ENCODE measurements at regions of chr20 and their contacts with region 1.

Region 1: DNA sequence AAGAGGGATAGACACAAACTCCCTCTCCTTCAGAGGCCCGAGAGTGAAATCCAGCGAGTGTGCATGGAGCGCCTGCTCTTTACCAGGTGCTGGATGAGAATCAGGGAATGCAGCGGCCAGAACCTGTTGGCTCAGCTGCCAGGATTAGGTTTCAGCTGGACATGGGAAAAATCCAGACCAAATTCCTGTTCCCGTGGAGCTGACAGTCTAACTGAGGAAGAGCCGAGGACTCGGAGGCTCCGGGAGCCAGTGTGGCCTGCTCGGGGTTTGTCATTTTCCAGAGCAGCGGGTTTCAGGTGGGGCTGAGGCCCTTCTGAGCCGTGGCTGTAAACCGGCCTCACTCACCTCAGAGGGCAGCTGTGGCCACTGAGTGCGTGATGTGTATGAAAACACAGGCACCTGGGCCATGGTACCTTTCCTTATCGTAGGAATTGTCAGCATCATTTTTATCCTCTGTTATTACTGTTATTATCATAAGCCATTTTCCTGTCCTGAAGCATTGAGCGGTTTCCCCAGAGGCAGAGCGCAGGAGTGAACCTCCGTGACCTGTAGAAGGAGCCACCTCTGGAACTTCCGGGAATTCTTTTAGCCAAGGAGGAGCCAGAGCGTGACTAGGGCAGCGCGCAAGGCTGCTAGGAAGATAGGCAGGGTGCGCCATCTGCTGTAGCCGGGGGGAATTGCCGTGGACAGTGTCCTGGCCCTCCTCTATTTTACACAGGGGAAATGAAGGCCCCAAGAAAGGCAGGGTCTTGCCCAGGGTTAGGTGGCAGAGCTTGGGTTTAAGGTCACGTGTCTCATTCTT is 27.3 kb downstream of the PKIG start:
- DNase-seq: peak; percentile 82
- CTCF ChIP-seq: peak; percentile 91

Region 2: GRCh38 chr20:44210422-44211176 is 399.1 kb before region 1 on chr20 and contains the start of gene OSER1:
- in situ Hi-C with region 1: loop called (anchors 10 kb)
- DNase-seq: peak; percentile 99
- CTCF ChIP-seq: no peak

Region 3: GRCh38 chr20:44398303-44398702 is 211.4 kb before region 1 on chr20:
- in situ Hi-C with region 1: loop called (anchors 10 kb)
- DNase-seq: no peak
- CTCF ChIP-seq: no peak

Region 4: GRCh38 chr20:44566013-44566412 is 43.7 kb before region 1 on chr20:
- in situ Hi-C with region 1: no loop called
- DNase-seq: no peak
- CTCF ChIP-seq: no peak

Measured in GM13976 (cell line).